ENCODE measurements at regions of chr2 and their contacts with region 1.

Region 1: GRCh38 chr2:43239981-43240761 is 13.8 kb upstream of the ZFP36L2 start:
- DNase-seq: no peak
- ATAC-seq: peak in 1 of 2 donors; percentile 20

Region 2: GRCh38 chr2:42974721-42975717 is 265.2 kb before region 1 on chr2:
- intact Hi-C with region 1: loop called in 1 of 2 experiments (anchors 10 kb)
- DNase-seq: peak; percentile 80
- ATAC-seq: peak; percentile 91 to 92

Region 3: GRCh38 chr2:43051316-43051715 is 188.9 kb before region 1 on chr2:
- intact Hi-C with region 1: no loop called
- DNase-seq: peak; percentile 34
- ATAC-seq: peak in 1 of 2 donors; percentile 63

Region 4: DNA sequence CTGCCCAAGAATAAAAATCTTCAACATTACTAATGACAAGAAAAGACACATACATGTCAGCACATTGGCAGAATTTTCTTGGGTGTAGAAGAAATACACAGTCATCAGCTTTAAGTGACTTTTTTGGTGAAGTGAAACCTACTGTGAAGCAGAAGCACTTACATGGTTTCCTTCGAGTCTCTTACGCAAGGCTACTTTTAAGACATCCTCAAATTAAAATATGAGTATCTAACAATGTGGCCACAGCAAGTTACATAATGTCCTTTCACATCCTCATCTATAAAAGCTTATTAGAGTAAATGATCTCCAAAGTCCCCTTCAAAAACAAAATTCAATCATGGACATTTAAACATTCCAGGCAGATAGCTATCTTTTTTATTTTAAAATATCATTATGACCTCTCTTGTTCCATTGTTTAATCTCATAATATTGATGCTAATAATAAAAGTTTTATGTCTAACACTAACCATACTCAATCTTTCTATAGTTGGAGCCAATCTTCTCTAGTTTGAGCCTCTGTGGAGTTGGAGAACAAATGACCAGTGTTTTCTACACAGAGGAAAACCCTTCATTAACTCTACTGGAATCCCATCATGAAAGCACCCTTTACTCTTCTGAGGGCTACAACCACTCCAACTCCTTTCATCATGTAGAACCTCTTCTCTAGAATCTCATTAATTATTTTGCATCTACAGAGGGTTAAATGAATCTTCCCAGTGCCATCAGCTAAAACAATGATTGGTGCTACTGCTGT is 168.4 kb after region 1 on chr2:
- intact Hi-C with region 1: no loop called
- DNase-seq: no peak
- ATAC-seq: peak; percentile 39 to 43

Region 5: GRCh38 chr2:43495727-43496126 is 255.6 kb after region 1 on chr2:
- intact Hi-C with region 1: no loop called
- DNase-seq: no peak
- ATAC-seq: peak in 1 of 2 donors; percentile 62

Measured in left cardiac atrium (tissue), 4 donors.